Heart left ventricle (tissue), 16 donors: ENCODE measurements at regions of chr2 and their contacts with region 1.

Region 1: DNA sequence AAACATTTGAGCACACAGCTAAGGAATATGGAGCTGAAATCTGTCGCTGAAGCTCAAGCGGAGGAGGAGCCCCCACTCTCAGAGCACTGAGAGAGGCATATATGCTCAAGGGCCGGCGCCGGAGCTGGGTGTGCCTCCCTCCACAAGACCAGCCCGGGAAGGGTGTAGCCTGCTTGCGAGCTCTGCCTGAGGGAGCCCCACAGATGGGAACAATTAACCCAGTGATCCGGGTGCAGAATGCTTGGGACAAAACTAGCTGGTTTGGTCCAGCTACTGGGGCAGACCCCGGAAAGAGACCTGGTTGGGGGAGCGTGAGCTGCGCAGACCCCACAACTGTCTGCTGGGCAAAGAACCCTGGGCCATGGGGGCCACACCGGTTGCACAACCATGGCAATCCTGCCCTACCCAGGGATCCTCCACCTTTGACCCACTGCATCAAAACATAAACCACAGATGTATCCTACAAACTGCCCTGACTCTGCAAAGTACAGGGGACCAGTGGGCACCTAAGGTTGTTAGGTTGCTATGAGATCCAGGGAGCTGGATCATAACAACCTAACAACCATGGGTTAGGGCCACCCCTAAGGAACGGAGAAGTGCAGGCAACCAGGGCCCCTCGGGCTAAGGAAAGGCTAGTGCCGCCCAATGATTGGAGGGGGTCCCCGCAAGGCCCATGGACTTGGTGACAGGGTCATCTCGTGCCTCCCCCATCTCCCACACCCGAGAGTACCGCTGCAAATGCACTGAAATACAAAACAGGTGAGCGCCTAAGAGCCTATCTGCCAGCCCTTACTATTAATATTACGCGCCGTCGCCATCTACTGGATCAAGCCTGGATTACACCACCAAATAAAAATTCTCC is 53.4 kb upstream of the SCN1A start:
- DNase-seq: peak in 1 of 5 donors; percentile 43
- ATAC-seq: peak in 3 of 4 donors; percentile 54 to 68 (median 66)
- H3K4me3 ChIP-seq: no peak overlapping the region
- H3K27ac ChIP-seq: no peak overlapping the region
- H3K4me1 ChIP-seq: no peaks in the 10 kb centered on the region
- H3K27me3 ChIP-seq: peaks cover 0 to 13% (median 0%) of the 10 kb centered on the region in 9 donors
- CTCF ChIP-seq: peak; percentile 20 to 57 (median 40)
- POLR2A ChIP-seq: no peak

Region 2: GRCh38 chr2:165953655-165954606 is 227.3 kb before region 1 on chr2 and contains the start of gene TTC21B:
- intact Hi-C with region 1: loop called in 2 of 10 experiments (anchors 5 to 10 kb)
- DNase-seq: peak; percentile 96 to 97 (median 97)
- ATAC-seq: peak; percentile 100
- H3K4me3 ChIP-seq: peak within 1 kb of the TSS; percentile 54 to 91 (median 80)
- H3K27ac ChIP-seq: peak within 1 kb of the TSS; percentile 23 to 91 (median 84)
- H3K4me1 ChIP-seq: peaks cover 0 to 37% (median 20%) of the 10 kb centered on the region in 12 donors
- H3K27me3 ChIP-seq: no peaks in the 10 kb centered on the region
- CTCF ChIP-seq: peak; percentile 78 to 88 (median 84)
- POLR2A ChIP-seq: peak; percentile 21 to 64
- total RNA-seq, gene TTC21B: 8.8 to 16.1 (median 13.6) TPM

Region 3: DNA sequence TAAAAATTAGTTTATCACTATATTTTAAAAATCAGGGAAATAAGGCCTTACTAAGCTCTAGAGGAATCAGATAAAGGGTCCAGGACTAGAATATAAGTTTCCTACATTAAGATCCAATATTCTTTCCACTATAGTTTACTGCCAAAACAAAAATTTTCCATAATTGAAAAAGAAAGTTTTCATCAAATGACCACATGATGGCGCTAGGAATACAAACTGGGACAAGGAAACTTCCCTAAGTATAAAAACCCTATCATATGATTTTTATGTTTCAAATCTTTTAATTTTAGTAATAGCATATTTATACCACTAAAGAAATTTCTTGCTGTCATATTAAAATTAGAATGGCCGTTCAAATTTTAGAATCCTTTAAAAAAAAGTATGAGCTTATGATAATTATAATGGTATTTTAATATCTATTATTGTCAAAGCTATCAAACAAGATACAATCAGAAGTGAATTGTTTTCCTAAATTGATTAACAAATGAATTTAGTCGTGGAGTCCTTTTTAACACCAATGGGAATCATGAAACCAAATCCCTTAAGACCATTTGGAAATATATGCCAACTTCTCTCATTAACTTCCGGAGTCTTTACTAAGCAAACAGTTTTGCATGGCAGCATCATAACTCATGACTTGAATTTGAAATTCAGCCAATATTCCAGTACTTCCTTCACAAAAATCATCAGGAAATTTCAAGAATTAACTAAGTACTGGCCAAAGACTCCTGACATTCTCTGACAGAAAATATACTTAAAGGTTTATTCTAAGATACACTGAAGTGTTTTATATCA is 123.6 kb before region 1 on chr2:
- intact Hi-C with region 1: loop called in 6 of 10 experiments (anchors 2 to 10 kb)
- DNase-seq: no peak
- ATAC-seq: no peak
- H3K4me3 ChIP-seq: no peak overlapping the region
- H3K27ac ChIP-seq: no peak overlapping the region
- H3K4me1 ChIP-seq: no peaks in the 10 kb centered on the region
- H3K27me3 ChIP-seq: no peaks in the 10 kb centered on the region
- CTCF ChIP-seq: peak; percentile 18 to 61 (median 47)
- POLR2A ChIP-seq: no peak